IMR-90 (cell line): ENCODE measurements at regions of chr21 and their contacts with region 1.

Region 1: GRCh38 chr21:45182958-45183357 is 104.7 kb downstream of the POFUT2 start:
- DNase-seq: no peak
- ATAC-seq: no peak
- H3K4me3 ChIP-seq: no peak overlapping the region
- H3K27ac ChIP-seq: no peak overlapping the region
- H3K4me1 ChIP-seq: no peaks in the 10 kb centered on the region; the same call in 1 of the 2 replicates
- H3K27me3 ChIP-seq: no peaks in the 10 kb centered on the region
- CTCF ChIP-seq: no peak
- POLR2A ChIP-seq: no peak
- RAD21 ChIP-seq: no peak

Region 2: GRCh38 chr21:45041351-45041805 is 141.6 kb before region 1 on chr21:
- CTCF ChIA-PET with region 1: no interaction called
- POLR2A ChIA-PET with region 1: no interaction called
- dilution Hi-C with region 1: no loop called
- in situ Hi-C with region 1: no loop called
- intact Hi-C with region 1: no loop called
- DNase-seq: peak; percentile 78
- ATAC-seq: peak; percentile 84
- H3K4me3 ChIP-seq: no peak overlapping the region
- H3K27ac ChIP-seq: peak overlapping the region; percentile 82
- H3K4me1 ChIP-seq: peaks cover 26% of the 10 kb centered on the region
- H3K27me3 ChIP-seq: no peaks in the 10 kb centered on the region
- CTCF ChIP-seq: no peak
- POLR2A ChIP-seq: no peak
- RAD21 ChIP-seq: no peak; the same call in 1 of the 2 replicates

Region 3: GRCh38 chr21:45169682-45170081 is 13.3 kb before region 1 on chr21:
- CTCF ChIA-PET with region 1: no interaction called
- POLR2A ChIA-PET with region 1: no interaction called
- dilution Hi-C with region 1: no loop called
- in situ Hi-C with region 1: no loop called
- intact Hi-C with region 1: loop called (anchors 1 kb)
- DNase-seq: no peak
- ATAC-seq: no peak
- H3K4me3 ChIP-seq: no peak overlapping the region
- H3K27ac ChIP-seq: no peak overlapping the region
- H3K4me1 ChIP-seq: peaks cover 21% of the 10 kb centered on the region
- H3K27me3 ChIP-seq: no peaks in the 10 kb centered on the region
- CTCF ChIP-seq: no peak
- POLR2A ChIP-seq: no peak
- RAD21 ChIP-seq: no peak

Region 4: GRCh38 chr21:45386721-45387371 is 203.9 kb after region 1 on chr21:
- CTCF ChIA-PET with region 1: no interaction called
- POLR2A ChIA-PET with region 1: no interaction called
- dilution Hi-C with region 1: no loop called
- in situ Hi-C with region 1: no loop called
- intact Hi-C with region 1: no loop called
- DNase-seq: peak; percentile 97
- ATAC-seq: peak; percentile 95
- H3K4me3 ChIP-seq: no peak overlapping the region
- H3K27ac ChIP-seq: peak overlapping the region; percentile 57
- H3K4me1 ChIP-seq: peaks cover 18% of the 10 kb centered on the region
- H3K27me3 ChIP-seq: no peaks in the 10 kb centered on the region
- CTCF ChIP-seq: peak; percentile 47
- POLR2A ChIP-seq: peak; percentile 64
- RAD21 ChIP-seq: peak; percentile 47; the same call in 1 of the 2 replicates

Region 5: DNA sequence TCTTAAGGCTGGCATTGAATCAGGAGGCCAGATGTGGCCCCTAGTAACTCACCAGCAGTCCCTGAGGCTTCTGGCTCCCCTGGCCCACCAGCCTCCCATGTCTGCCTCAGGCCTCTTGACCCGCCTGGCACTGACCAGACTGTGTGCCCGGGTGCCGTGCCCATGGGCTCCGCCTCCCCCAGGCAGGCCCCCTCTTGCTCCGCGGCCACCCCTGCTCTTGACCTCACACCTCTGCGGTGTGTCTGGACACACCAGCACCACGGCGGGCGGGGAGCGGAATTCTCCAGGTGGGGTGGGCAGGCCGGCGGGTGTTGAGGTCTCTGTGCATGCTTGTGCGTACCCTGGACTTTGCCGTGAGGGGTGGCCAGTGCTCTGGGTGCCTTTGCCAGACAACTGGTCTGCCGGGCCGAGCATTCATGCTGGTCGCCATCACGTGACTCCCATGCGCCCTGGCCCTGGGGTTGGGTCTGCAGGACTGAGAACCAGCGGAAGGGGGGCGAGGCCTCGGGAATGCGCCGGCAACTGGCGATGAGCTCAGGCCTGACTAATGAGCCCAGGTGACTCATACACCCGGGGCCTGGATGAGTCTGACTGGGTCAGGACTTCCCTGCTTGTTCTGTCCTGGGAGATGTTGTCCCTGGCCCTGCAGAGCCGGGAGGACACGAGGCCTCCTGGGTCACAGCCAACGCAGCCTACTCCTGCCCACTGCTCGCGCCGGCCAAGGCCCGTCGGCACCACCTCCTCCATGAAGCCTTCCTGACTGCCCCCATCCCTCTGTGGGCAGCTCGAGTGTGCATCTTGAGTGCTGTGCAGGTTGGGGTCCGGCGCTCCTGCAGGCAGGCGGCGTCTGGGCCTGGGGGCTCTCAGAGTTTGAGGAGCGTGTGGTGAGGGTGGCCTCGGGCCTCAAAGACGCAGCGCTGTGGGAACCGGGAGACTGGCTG is 244.6 kb after region 1 on chr21:
- CTCF ChIA-PET with region 1: no interaction called
- POLR2A ChIA-PET with region 1: no interaction called
- dilution Hi-C with region 1: no loop called
- in situ Hi-C with region 1: no loop called
- intact Hi-C with region 1: no loop called
- DNase-seq: peak; percentile 98
- ATAC-seq: peak; percentile 96
- H3K4me3 ChIP-seq: no peak overlapping the region
- H3K27ac ChIP-seq: peak overlapping the region; percentile 58
- H3K4me1 ChIP-seq: peaks cover 32% of the 10 kb centered on the region
- H3K27me3 ChIP-seq: no peaks in the 10 kb centered on the region
- CTCF ChIP-seq: no peak
- POLR2A ChIP-seq: 0 out of 2 replicates have a peak, but pooled peaks have one; percentile 37
- RAD21 ChIP-seq: peak; percentile 34